ENCODE measurements at regions of chr2 and their contacts with region 1.

Region 1: GRCh38 chr2:96960153-96960961 is 26.0 kb downstream of the FAM178B start:
- DNase-seq: peak; percentile 92
- CTCF ChIP-seq: peak; percentile 92

Region 2: GRCh38 chr2:96895726-96896651 is 64.4 kb before region 1 on chr2:
- in situ Hi-C with region 1: no loop called
- DNase-seq: no peak
- CTCF ChIP-seq: no peak

Region 3: DNA sequence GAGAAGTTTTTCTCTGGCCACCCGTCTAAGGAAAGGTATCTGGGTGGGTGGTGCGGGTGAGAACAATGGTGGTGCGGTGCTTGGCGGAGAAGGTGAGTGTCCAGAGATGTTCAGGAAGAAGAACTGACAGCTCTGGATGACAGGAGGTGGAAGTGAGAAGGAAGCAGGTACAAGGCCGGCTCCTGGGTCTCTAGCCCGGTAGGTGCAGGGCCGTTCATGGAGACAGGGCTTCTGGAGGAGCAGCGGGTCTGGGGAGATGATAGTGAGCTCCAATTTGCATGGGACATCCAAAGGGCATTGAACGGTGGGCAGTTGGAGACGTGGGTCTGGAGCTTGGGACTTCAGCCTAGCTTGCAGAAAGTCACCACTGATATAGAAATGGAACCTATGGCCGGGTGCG is 135.3 kb after region 1 on chr2:
- in situ Hi-C with region 1: loop called (anchors 25 kb)
- DNase-seq: no peak
- CTCF ChIP-seq: no peak